H1 (cell line): ENCODE measurements at regions of chr5 and their contacts with region 1.

Region 1: GRCh38 chr5:67156976-67157583 is 39.5 kb downstream of the CD180 start:
- DNase-seq: no peak
- H3K4me3 ChIP-seq: no peak overlapping the region
- H3K27ac ChIP-seq: no peak overlapping the region
- H3K4me1 ChIP-seq: no peaks in the 10 kb centered on the region
- H3K27me3 ChIP-seq: no peaks in the 10 kb centered on the region
- CTCF ChIP-seq: peak; percentile 54 to 79 (median 55)
- EP300 ChIP-seq: no peak
- POLR2A ChIP-seq: no peak
- RAD21 ChIP-seq: peak; percentile 61 to 71

Region 2: GRCh38 chr5:67118050-67118620 is 38.9 kb before region 1 on chr5:
- CTCF ChIA-PET with region 1: no interaction called
- POLR2A ChIA-PET with region 1: no interaction called
- DNase-seq: no peak
- H3K4me3 ChIP-seq: no peak overlapping the region
- H3K27ac ChIP-seq: no peak overlapping the region
- H3K4me1 ChIP-seq: no peaks in the 10 kb centered on the region
- H3K27me3 ChIP-seq: no peaks in the 10 kb centered on the region
- CTCF ChIP-seq: no peak
- EP300 ChIP-seq: no peak
- POLR2A ChIP-seq: no peak
- RAD21 ChIP-seq: no peak

Region 3: GRCh38 chr5:67173959-67174358 is 16.9 kb after region 1 on chr5:
- CTCF ChIA-PET with region 1: interaction called, 11 read pairs
- POLR2A ChIA-PET with region 1: no interaction called
- DNase-seq: no peak
- H3K4me3 ChIP-seq: no peak overlapping the region
- H3K27ac ChIP-seq: no peak overlapping the region
- H3K4me1 ChIP-seq: no peaks in the 10 kb centered on the region; a peak in 1 of 7 replicates
- H3K27me3 ChIP-seq: no peaks in the 10 kb centered on the region
- CTCF ChIP-seq: no peak
- EP300 ChIP-seq: no peak
- POLR2A ChIP-seq: no peak
- RAD21 ChIP-seq: no peak

Region 4: GRCh38 chr5:67209142-67209771 is 52.2 kb after region 1 on chr5:
- CTCF ChIA-PET with region 1: interaction called, 48 read pairs
- POLR2A ChIA-PET with region 1: no interaction called
- DNase-seq: peak; percentile 44 to 71
- H3K4me3 ChIP-seq: no peak overlapping the region
- H3K27ac ChIP-seq: no peak overlapping the region
- H3K4me1 ChIP-seq: no peaks in the 10 kb centered on the region
- H3K27me3 ChIP-seq: no peaks in the 10 kb centered on the region
- CTCF ChIP-seq: peak in 2 of 3 experiments; percentile 81 to 82; a peak in 3 of 4 replicates
- EP300 ChIP-seq: no peak
- POLR2A ChIP-seq: no peak
- RAD21 ChIP-seq: peak; percentile 91 to 92